Motor neuron (in vitro differentiated cells): ENCODE measurements at regions of chr20 and their contacts with region 1.

Region 1: GRCh38 chr20:53570521-53571357 is 22.9 kb downstream of the ZNF217 start:
- ATAC-seq: no peak
- H3K4me3 ChIP-seq: no peak overlapping the region
- H3K27ac ChIP-seq: no peak overlapping the region
- H3K4me1 ChIP-seq: no peaks in the 10 kb centered on the region

Region 2: DNA sequence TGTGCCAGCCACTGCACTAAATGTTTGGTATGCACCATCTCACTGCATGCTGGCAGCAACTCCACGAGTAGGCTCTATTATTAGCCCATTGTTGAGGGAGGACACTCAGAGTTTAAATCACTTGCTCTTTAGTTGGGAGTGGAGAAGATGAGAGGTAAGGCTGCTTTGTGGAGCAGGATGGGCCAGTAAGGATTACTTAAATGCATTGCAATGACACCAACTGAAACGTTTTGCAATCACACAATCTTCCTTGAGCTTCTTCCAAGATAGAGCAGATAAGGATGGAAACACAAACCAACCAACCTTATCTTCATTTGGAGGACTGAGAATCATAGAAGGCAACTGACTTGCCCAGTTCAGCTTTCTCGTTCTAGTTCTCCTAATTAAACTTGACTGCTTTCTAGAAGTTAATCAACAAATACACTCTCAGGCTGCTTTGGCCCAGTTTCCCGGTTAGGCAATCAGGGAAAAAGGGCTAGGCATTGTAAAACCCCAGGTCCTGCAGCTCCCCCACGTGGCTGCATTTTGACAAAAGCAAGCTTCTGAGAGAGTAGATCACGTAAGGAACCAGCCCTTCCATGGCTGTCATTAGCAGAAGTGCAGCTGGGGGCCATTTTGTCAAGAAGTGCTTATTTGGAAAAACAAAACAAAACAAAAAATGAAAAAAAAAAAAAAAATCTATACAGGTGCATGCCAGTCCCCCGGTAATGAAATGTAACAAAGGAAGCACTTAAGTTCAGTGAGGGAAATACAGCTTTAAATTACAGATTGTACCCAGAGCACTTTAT is 369.0 kb after region 1 on chr20:
- in situ Hi-C with region 1: loop called in 7 of 9 experiments (anchors 10 to 25 kb)
- ATAC-seq: peak; percentile 73 to 87 (median 86)
- H3K4me3 ChIP-seq: peak overlapping the region in 4 of 5 donors; percentile 17 to 30 (median 22)
- H3K27ac ChIP-seq: peak overlapping the region; percentile 5 to 55
- H3K4me1 ChIP-seq: peaks cover 33% of the 10 kb centered on the region in 2 donors

Region 3: GRCh38 chr20:54062812-54063280 is 492.1 kb after region 1 on chr20:
- in situ Hi-C with region 1: loop called in 5 of 9 experiments (anchors 25 kb)
- ATAC-seq: peak; percentile 54 to 84 (median 64)
- H3K4me3 ChIP-seq: no peak overlapping the region
- H3K27ac ChIP-seq: no peak overlapping the region
- H3K4me1 ChIP-seq: peaks cover 6 to 10% of the 10 kb centered on the region in 2 donors

Region 4: DNA sequence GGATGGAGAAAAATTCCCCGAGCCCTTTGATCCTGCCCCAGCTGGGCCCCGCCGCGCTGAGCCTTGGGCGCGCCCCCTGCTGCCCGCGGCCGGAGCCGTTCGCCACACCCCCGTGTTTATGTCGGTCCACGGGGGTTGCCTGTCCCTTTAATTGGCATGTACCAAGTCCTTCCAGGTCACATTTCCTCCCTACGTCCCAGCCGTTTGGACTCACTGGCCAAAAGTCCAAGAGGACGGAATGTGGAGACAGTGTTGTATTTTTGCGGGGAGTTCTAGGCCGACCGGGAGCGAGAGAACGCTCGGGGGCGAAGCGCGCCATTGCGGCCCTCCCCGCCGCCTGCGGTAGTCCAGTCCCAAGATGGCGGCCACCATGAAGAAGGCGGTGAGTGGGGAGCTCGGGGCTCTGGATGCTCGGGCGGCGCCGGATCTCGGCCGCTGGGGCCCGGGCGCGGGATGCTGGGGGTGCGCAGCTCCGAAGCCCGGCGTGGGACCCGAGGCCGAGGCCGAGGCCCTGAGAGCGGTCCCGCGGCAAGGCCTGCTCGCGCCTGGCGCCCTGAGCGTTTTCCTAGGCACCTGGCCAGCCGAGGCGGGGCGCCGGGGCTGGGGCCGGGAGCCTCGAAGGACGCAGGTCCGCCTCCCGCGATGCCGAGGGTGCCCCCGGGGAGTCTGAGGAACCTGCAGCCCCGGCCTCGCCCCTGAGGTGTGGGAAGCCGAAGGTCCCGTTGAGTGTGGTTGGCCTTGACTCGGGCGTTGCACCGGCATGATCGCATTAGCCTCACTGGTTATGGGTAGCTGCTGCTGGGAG is 637.2 kb after region 1 on chr20 and contains the start of gene PFDN4:
- in situ Hi-C with region 1: loop called in 1 of 9 experiments (anchors 25 kb)
- ATAC-seq: peak; percentile 90 to 98 (median 98)
- H3K4me3 ChIP-seq: peak within 1 kb of the TSS; percentile 77 to 96 (median 93)
- H3K27ac ChIP-seq: peak within 1 kb of the TSS; percentile 99 to 100
- H3K4me1 ChIP-seq: peaks cover 4 to 11% of the 10 kb centered on the region in 2 donors
- total RNA-seq, gene PFDN4: 77.6 to 149 (median 137) TPM

Region 5: GRCh38 chr20:54549658-54550326 is 979.1 kb after region 1 on chr20:
- in situ Hi-C with region 1: no loop called
- ATAC-seq: no peak
- H3K4me3 ChIP-seq: no peak overlapping the region
- H3K27ac ChIP-seq: no peak overlapping the region
- H3K4me1 ChIP-seq: no peaks in the 10 kb centered on the region